ENCODE measurements at regions of chr3 and their contacts with region 1.

Region 1: GRCh38 chr3:50568947-50569749 is at the start of gene HEMK1:
- DNase-seq: peak; percentile 90
- ATAC-seq: peak; percentile 74
- H3K4me3 Mint-ChIP-seq: peak within 1 kb of the TSS; percentile 97
- H3K27ac Mint-ChIP-seq: peak within 1 kb of the TSS; percentile 93
- H3K4me1 Mint-ChIP-seq: peaks cover 34% of the 10 kb centered on the region
- H3K27me3 Mint-ChIP-seq: no peaks in the 10 kb centered on the region
- CTCF ChIP-seq: no peak
- total RNA-seq, gene HEMK1: 23.5 and 26.9 TPM in 2 replicates

Region 2: DNA sequence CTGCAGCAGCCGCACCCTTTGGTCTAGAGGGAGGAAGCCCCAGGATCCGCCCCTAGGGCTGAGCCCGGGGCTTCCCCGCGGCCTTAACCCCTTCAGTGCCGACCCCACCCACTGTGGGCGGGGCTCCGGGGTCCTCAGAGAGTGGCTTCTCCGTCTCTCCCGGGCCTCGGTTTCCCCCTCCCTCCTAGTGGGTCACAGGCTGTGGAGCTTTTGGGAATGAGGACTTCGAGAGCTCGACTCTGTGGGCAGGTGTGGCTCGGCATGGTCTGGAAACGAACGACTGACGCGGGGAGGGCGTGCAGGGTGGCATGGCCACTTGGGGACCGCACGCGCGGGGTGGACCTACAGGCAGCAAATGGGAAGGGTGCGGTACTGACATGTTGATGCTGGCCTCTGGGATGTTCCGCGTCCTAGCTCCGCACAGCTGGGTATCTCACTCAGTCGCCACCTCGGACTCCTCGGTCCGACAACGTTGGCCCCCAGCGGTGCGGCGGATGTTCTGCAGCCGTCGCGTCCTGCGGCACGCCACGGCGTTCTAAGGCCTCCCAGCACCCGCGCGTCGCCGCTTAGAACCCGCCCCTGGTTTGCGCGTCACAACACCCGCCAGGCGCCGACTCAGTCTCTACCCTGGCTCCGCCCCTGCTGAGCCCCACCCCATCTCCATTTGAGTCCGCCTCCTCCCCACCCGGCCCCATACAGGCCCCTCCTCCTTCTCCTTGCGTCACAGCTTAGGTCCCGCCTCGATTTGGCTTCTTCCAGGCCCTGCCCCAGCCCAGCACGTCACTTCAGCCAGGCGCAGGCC is 270.1 kb before region 1 on chr3 and contains the starts of genes HYAL3 and NAA80:
- CTCF ChIA-PET with region 1: no interaction called
- POLR2A ChIA-PET with region 1: interaction called, 7 read pairs
- intact Hi-C with region 1: loop called (anchors 2 kb)
- DNase-seq: peak; percentile 98
- ATAC-seq: peak; percentile 89
- H3K4me3 Mint-ChIP-seq: peak within 1 kb of the TSS; percentile 98
- H3K27ac Mint-ChIP-seq: peak within 1 kb of the TSS; percentile 98
- H3K4me1 Mint-ChIP-seq: peaks cover 30% of the 10 kb centered on the region
- H3K27me3 Mint-ChIP-seq: no peaks in the 10 kb centered on the region
- CTCF ChIP-seq: no peak
- total RNA-seq, gene HYAL3: 2.0 and 2.5 TPM in 2 replicates
- total RNA-seq, gene NAA80: 23.9 and 24.8 TPM in 2 replicates

Region 3: DNA sequence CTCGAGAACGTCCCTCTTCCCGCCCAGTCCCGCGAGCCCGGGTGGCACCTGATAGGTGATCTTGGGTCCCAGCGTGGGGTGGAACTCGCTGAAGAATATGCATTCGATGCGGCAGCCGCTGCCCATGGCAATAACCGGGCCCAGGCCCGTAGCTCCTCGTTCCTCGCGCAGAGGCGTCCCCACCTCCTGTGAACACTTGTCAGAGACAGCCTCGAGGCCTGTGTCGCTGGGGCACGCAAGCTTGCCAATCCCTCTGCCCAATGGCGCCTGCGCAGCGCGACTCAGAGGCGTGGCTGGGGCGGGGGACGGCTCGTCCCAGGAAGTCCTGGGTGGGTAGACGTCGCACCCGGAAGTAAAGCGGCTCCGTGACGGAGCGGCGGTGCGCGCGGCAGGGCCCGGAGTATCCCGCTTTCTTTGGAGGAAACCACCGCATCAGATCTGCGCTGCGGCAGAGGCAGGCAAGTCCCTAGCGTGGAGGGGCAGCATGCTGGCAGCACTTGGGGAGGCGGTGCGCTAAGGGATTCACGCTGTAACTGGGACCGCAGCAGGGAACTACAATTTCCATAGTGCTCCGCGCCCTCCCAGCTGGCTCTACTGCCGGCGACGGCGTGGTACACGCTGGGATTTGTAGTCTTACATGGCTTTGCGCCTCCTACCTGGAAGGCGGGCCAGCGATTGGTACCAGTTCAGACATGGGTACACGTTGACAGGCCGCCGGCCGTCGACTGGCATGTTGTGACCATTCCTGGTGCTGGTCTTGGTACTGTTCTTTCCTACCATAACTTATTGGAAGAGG is 218.4 kb before region 1 on chr3 and contains the starts of genes CYB561D2 and NPRL2:
- CTCF ChIA-PET with region 1: interaction called, 3 read pairs
- POLR2A ChIA-PET with region 1: interaction called, 22 read pairs
- intact Hi-C with region 1: loop called (anchors 1 kb)
- DNase-seq: peak; percentile 99
- ATAC-seq: peak; percentile 89
- H3K4me3 Mint-ChIP-seq: peak within 1 kb of the TSS; percentile 97
- H3K27ac Mint-ChIP-seq: peak within 1 kb of the TSS; percentile 99
- H3K4me1 Mint-ChIP-seq: peaks cover 60% of the 10 kb centered on the region
- H3K27me3 Mint-ChIP-seq: no peaks in the 10 kb centered on the region
- CTCF ChIP-seq: no peak
- total RNA-seq, gene CYB561D2: 22.9 and 26.0 TPM in 2 replicates
- total RNA-seq, gene NPRL2: 23.6 and 26.4 TPM in 2 replicates

Region 4: DNA sequence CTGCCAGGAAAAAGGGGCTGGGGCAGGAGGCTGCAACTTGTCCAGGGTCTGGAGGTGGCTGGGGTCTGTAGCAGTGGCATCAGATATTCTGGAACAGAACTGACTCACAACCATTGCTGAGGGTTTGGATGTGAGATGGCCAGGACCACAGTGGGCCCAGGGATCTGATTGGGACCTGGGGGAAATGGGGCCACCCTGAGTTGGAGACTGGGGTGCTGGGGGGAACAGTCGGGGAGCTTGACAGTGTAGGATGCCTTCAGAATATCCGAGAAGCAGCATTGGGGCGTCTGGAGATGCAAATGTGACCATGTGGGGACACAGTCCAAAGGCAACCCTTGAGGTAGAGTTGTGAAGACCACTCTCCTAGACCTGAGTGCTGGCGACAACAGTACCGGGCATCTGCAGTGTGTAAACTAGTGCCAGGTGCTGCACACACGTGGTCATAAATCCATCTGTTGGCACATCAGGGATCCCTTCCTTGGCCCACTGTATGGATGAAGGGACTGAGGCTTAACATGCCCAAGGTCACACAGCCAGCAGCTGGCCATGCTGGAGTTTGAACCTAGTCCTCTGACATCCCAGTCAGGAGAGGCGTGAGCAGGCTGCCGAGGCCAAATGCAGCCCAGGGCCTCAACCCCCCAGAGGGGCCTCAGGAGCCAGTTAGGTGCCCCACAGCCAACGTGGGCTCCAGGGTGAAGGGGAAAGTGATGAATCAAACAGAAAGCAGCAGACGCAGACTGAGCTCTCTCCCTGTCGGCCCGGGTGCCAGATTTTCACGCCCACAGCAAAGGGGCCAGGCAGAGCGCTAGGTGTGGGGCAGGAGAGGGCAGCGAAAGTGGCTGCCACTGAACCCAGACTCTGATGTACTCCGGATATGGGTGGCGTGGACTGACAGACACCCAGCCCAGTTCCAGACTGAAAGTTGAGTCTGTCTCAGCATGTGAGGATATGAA is 18.9 kb after region 1 on chr3:
- CTCF ChIA-PET with region 1: interaction called, 41 read pairs
- POLR2A ChIA-PET with region 1: interaction called, 82 read pairs
- intact Hi-C with region 1: loop called (anchors 1 kb)
- DNase-seq: no peak
- ATAC-seq: peak; percentile 6
- H3K4me3 Mint-ChIP-seq: no peak overlapping the region
- H3K27ac Mint-ChIP-seq: peak overlapping the region; percentile 63
- H3K4me1 Mint-ChIP-seq: peaks cover 34% of the 10 kb centered on the region
- H3K27me3 Mint-ChIP-seq: no peaks in the 10 kb centered on the region
- CTCF ChIP-seq: no peak

Region 5: DNA sequence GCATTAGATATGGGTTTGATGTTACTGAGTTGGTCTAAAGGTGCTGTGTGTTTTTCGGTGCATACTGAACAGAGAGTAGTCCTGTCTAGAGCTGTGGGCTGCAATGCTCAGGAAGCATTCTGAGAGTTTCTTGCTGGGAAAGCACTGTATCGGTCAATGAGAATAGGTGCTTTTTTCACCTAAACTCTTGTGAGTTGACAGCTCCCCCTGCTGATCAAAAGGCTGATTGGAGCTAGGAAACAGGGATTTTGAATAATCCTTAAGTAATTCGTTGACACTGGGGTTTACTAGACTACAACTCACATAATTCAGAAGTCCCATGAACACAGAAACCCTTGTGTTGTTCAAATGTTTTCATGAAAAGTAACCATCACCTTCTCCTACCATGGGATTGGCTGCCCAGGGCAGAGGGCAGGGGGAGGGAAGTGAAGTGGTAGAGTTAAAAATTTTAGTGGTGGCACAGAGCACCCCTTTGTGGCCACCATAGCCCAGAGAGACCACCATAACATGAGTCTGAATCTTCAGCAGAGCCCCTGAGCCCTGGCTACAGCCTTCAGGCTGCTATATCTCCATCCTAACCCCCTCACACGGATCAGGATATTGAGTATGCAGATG is 802.9 kb after region 1 on chr3:
- CTCF ChIA-PET with region 1: interaction called, 3 read pairs
- POLR2A ChIA-PET with region 1: no interaction called
- intact Hi-C with region 1: loop called (anchors 5 kb)
- DNase-seq: no peak
- ATAC-seq: no peak
- H3K4me3 Mint-ChIP-seq: no peak overlapping the region
- H3K27ac Mint-ChIP-seq: no peak overlapping the region
- H3K4me1 Mint-ChIP-seq: no peaks in the 10 kb centered on the region
- H3K27me3 Mint-ChIP-seq: peaks cover 46% of the 10 kb centered on the region
- CTCF ChIP-seq: no peak

Region 6: DNA sequence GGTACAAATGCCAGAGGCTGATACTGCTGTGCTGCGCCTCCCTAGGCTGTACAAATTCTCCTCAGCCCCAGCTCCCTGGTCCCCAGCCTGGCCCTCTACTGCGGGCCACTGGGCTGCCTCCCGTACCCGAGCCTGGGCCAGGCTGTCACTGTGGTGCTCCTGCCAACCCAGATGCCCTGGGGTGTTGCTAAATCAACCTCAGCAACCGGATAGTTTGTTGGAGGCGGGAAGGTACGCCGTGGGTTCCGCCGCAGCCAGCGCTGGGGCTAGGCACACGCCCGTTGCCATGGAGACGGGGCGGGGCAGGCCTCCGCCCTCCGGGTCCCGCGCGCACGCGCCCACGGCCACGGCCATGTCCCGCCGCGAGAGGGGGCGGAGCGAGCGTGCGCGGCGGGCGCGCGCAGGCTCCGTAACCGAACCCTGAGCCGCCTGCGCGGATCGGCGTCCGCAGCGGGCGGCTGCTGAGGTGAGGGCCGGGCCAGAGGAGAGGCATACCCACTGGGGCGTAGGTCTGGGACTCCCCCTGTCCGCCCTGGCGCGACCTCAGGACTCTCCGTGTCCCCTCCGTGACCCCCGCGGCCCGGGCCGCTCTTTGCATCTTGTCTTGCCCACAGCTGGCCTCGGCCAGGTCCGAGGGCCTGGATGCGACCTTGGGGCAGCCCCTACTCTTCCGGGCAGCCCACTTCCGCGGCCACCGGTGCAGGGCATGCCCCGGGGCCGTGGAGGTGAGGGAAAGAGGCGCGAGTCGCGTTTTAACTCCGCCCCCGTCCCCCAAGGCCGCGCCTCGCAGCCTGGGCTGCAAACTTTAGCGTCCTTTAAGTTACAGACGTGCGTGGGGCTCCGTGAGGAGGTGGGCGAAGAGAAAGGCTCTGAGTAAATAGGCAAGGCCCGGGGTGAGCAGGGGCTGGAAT is 1101.9 kb after region 1 on chr3 and contains the start of gene TEX264:
- CTCF ChIA-PET with region 1: no interaction called
- POLR2A ChIA-PET with region 1: no interaction called
- intact Hi-C with region 1: loop called (anchors 5 kb)
- DNase-seq: peak; percentile 95
- ATAC-seq: peak; percentile 85
- H3K4me3 Mint-ChIP-seq: peak within 1 kb of the TSS; percentile 89
- H3K27ac Mint-ChIP-seq: peak within 1 kb of the TSS; percentile 89
- H3K4me1 Mint-ChIP-seq: peaks cover 55% of the 10 kb centered on the region
- H3K27me3 Mint-ChIP-seq: no peaks in the 10 kb centered on the region
- CTCF ChIP-seq: no peak
- total RNA-seq, gene TEX264: 24.1 and 24.4 TPM in 2 replicates